Activated CD8-positive, alpha-beta T cell treated with anti-CD3 and anti-CD28 coated beads for 36 hours (primary cell): ENCODE measurements at regions of chr1 and their contacts with region 1.

Region 1: DNA sequence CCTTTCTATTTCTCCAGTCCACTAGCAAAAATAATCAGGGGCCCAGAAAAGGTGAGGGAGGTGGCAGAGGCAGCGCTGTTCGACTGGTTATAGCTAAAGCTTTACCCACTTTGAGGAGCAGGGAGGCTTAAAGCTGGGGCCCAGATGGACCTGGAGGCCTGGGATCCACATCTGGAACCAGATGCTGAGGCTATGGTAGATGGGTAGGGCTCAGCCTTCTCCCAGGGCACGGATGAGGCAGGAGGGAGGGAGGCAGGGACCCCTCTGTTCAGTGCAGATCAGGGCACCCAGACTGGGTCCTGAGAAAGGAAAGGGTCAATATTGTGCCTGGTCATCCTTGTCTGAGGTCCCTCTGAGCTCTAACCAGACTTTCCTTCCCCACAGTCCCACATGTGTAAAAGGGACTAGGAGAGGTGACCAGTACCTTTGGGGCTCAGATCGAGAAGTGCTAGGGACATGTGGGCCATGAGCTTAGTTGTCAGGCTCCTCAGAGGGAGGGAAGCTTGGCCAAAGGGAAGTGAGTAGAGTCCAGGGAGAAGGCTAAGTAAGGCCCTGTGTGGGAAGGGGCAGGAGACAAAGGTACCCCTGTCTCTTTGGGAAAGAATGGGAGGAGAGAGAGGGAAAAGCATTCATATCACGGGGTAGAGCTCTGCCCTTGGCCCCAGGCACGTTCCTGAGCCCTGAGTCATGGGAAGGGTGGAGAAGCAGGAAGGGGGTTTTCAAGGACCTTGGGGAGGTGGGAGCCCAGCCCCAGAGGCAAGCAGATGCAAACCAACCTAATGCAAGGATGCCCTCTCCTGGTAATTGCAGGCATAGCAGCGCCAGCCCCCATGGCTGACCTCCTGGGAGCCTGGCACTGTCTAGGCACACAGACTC is 15.4 kb downstream of the LMNA start:
- DNase-seq: peak; percentile 89
- ATAC-seq: peak; percentile 50
- H3K4me3 Mint-ChIP-seq: no peak overlapping the region
- H3K27ac Mint-ChIP-seq: peak overlapping the region; percentile 63
- H3K4me1 Mint-ChIP-seq: peaks cover 50% of the 10 kb centered on the region
- H3K27me3 Mint-ChIP-seq: peaks cover 3% of the 10 kb centered on the region
- CTCF ChIP-seq: peak; percentile 98

Region 2: GRCh38 chr1:156054500-156055280 is 75.3 kb before region 1 on chr1 and contains the start of gene LAMTOR2:
- CTCF ChIA-PET with region 1: no interaction called
- POLR2A ChIA-PET with region 1: no interaction called
- intact Hi-C with region 1: loop called (anchors 2 kb)
- DNase-seq: peak; percentile 99
- ATAC-seq: peak; percentile 78
- H3K4me3 Mint-ChIP-seq: peak within 1 kb of the TSS; percentile 96
- H3K27ac Mint-ChIP-seq: peak within 1 kb of the TSS; percentile 95
- H3K4me1 Mint-ChIP-seq: peaks cover 22% of the 10 kb centered on the region
- H3K27me3 Mint-ChIP-seq: no peaks in the 10 kb centered on the region
- CTCF ChIP-seq: no peak
- total RNA-seq, gene LAMTOR2: 48.9 to 49.4 TPM

Region 3: GRCh38 chr1:156090822-156091188 is 39.1 kb before region 1 on chr1:
- CTCF ChIA-PET with region 1: interaction called, 772 read pairs
- POLR2A ChIA-PET with region 1: interaction called, 151 read pairs
- intact Hi-C with region 1: loop called (anchors 1 kb)
- DNase-seq: peak; percentile 94
- ATAC-seq: peak; percentile 98
- H3K4me3 Mint-ChIP-seq: no peak overlapping the region
- H3K27ac Mint-ChIP-seq: no peak overlapping the region
- H3K4me1 Mint-ChIP-seq: peaks cover 5% of the 10 kb centered on the region
- H3K27me3 Mint-ChIP-seq: peaks cover 26% of the 10 kb centered on the region
- CTCF ChIP-seq: peak; percentile 87

Region 4: DNA sequence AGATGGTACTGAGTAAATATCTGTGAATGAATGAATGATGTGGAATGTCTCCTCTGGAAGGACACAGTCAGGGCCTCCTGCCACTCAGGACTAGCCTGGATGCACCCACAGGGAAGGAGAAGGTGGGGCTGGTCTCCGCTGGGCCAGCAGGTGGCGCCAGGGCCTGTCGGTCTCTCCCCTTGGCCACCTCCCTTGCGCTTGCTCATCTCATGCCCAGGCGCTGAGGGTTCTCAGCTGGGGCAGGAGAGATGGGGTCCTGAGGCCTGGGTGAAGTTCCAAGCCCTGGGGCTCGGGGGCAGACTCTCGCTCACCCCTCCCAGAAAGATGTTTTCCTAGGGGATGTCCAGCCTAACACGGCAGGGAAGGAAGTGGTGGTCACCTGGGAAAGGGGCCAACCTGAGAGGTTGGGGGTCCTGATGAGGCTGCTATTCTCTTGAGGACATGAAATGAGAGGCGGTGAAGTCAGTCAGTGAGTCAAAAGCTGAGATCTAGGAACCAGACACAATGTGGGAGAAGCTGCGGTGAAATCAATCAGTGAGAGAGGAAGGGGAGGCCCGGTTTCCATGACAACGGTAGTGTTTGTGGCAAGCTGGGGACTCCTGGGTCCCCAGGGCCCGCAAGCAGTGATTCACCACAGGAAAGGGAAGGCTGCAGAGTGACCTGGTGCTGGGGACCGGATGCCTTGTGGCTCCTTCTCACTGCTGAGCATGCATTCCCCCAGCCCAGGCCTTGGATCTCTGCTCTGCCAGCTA is 33.1 kb before region 1 on chr1:
- CTCF ChIA-PET with region 1: interaction called, 772 read pairs
- POLR2A ChIA-PET with region 1: interaction called, 151 read pairs
- intact Hi-C with region 1: loop called (anchors 1 kb)
- DNase-seq: peak; percentile 97
- ATAC-seq: peak; percentile 81
- H3K4me3 Mint-ChIP-seq: peak overlapping the region; percentile 52
- H3K27ac Mint-ChIP-seq: peak overlapping the region; percentile 93
- H3K4me1 Mint-ChIP-seq: peaks cover 45% of the 10 kb centered on the region
- H3K27me3 Mint-ChIP-seq: peaks cover 20% of the 10 kb centered on the region
- CTCF ChIP-seq: peak; percentile 99

Region 5: GRCh38 chr1:156104065-156104810 is 25.7 kb before region 1 on chr1:
- CTCF ChIA-PET with region 1: interaction called, 772 read pairs
- POLR2A ChIA-PET with region 1: interaction called, 151 read pairs
- intact Hi-C with region 1: no loop called
- DNase-seq: peak; percentile 51
- ATAC-seq: peak; percentile 9
- H3K4me3 Mint-ChIP-seq: no peak overlapping the region
- H3K27ac Mint-ChIP-seq: peak overlapping the region; percentile 76
- H3K4me1 Mint-ChIP-seq: peaks cover 64% of the 10 kb centered on the region
- H3K27me3 Mint-ChIP-seq: peaks cover 8% of the 10 kb centered on the region
- CTCF ChIP-seq: no peak

Region 6: GRCh38 chr1:156114101-156114916 is 15.6 kb before region 1 on chr1 and contains the start of gene LMNA:
- CTCF ChIA-PET with region 1: interaction called, 103 read pairs
- POLR2A ChIA-PET with region 1: interaction called, 46 read pairs
- intact Hi-C with region 1: no loop called
- DNase-seq: peak; percentile 92
- ATAC-seq: peak; percentile 89
- H3K4me3 Mint-ChIP-seq: peak within 1 kb of the TSS; percentile 85
- H3K27ac Mint-ChIP-seq: peak within 1 kb of the TSS; percentile 87
- H3K4me1 Mint-ChIP-seq: peaks cover 41% of the 10 kb centered on the region
- H3K27me3 Mint-ChIP-seq: peaks cover 8% of the 10 kb centered on the region
- CTCF ChIP-seq: no peak
- total RNA-seq, gene LMNA: 51.8 to 56.6 TPM

Region 7: GRCh38 chr1:156319664-156320063 is 189.7 kb after region 1 on chr1:
- CTCF ChIA-PET with region 1: interaction called, 12 read pairs
- POLR2A ChIA-PET with region 1: no interaction called
- intact Hi-C with region 1: no loop called
- DNase-seq: peak; percentile 39
- ATAC-seq: no peak
- H3K4me3 Mint-ChIP-seq: no peak overlapping the region
- H3K27ac Mint-ChIP-seq: no peak overlapping the region
- H3K4me1 Mint-ChIP-seq: no peaks in the 10 kb centered on the region
- H3K27me3 Mint-ChIP-seq: no peaks in the 10 kb centered on the region
- CTCF ChIP-seq: peak; percentile 47